ENCODE measurements at regions of chr9 and their contacts with region 1.

Region 1: GRCh38 chr9:97468658-97469448 is 32.6 kb upstream of the TMOD1 start:
- DNase-seq: no peak
- ATAC-seq: no peak
- H3K4me3 Mint-ChIP-seq: no peak overlapping the region
- H3K27ac Mint-ChIP-seq: no peak overlapping the region
- H3K4me1 Mint-ChIP-seq: no peaks in the 10 kb centered on the region
- H3K27me3 Mint-ChIP-seq: no peaks in the 10 kb centered on the region
- CTCF ChIP-seq: no peak

Region 2: DNA sequence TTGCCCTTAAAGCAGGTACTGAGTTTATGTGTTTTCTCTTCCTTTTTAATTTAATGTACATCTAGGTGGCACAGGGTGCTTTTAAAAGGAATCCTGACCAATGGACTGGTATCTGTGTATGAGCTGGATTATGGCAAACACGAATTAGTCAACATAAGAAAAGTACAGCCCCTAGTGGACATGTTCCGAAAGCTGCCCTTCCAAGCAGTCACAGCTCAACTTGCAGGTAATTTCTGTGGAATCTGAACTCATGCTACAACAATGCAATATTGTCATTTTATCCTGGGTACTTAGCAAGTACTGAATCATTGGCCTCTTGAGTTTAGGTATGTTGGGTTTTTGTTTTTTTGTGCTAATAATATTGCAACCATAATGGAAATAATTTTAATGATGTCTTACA is 18.3 kb after region 1 on chr9:
- CTCF ChIA-PET with region 1: no interaction called
- POLR2A ChIA-PET with region 1: no interaction called
- intact Hi-C with region 1: no loop called
- DNase-seq: no peak
- ATAC-seq: no peak
- H3K4me3 Mint-ChIP-seq: no peak overlapping the region
- H3K27ac Mint-ChIP-seq: no peak overlapping the region
- H3K4me1 Mint-ChIP-seq: no peaks in the 10 kb centered on the region
- H3K27me3 Mint-ChIP-seq: no peaks in the 10 kb centered on the region
- CTCF ChIP-seq: no peak

Region 3: DNA sequence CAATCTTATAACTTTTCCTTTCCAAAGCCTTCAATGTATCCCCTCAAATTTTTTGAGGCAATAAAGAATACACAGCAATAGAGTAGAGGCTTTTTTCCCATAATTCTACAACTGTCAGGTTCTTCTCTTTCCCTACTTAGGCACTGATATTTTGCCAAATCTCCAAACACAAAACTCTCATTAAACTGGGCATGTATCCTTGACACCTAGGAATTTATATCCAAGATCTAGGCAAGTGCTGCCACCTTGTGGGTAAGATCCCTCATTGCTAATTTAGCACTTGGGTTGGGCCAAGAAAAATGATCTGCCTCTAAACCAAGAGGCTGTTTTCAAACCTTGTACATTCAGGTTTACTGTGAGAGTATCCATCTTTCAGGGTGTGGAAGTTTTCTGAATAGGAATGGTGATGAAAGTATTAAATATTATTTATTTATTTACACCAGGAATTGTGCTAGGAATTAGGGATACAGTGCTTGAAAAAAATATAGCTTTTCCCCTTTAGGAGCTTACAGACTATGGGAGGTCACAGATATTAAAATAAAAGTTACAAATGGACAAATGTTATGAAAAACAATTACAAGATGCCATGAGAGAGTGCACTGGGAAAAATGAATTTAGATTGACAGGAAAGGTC is 146.7 kb after region 1 on chr9:
- CTCF ChIA-PET with region 1: interaction called, 19 read pairs
- POLR2A ChIA-PET with region 1: no interaction called
- intact Hi-C with region 1: loop called (anchors 1 kb)
- DNase-seq: no peak
- ATAC-seq: peak; percentile 52
- H3K4me3 Mint-ChIP-seq: no peak overlapping the region
- H3K27ac Mint-ChIP-seq: no peak overlapping the region
- H3K4me1 Mint-ChIP-seq: peaks cover 12% of the 10 kb centered on the region
- H3K27me3 Mint-ChIP-seq: no peaks in the 10 kb centered on the region
- CTCF ChIP-seq: peak; percentile 77

Measured in activated B cell treated with CpG ODN at 0.5 μM for 24 hours (primary cell).